Activated naive CD4-positive, alpha-beta T cell treated with anti-CD3 and anti-CD28 coated beads for 36 hours (primary cell): ENCODE measurements at regions of chr14 and their contacts with region 1.

Region 1: GRCh38 chr14:32560209-32560857 is 231.2 kb downstream of the AKAP6 start:
- DNase-seq: peak; percentile 64
- H3K4me3 Mint-ChIP-seq: no peak overlapping the region
- H3K27ac Mint-ChIP-seq: no peak overlapping the region
- H3K4me1 Mint-ChIP-seq: peaks cover 12% of the 10 kb centered on the region
- H3K27me3 Mint-ChIP-seq: no peaks in the 10 kb centered on the region

Region 2: GRCh38 chr14:31510222-31510621 is 1050.1 kb before region 1 on chr14:
- CTCF ChIA-PET with region 1: no interaction called
- intact Hi-C with region 1: loop called (anchors 1 kb)
- DNase-seq: no peak
- H3K4me3 Mint-ChIP-seq: no peak overlapping the region
- H3K27ac Mint-ChIP-seq: no peak overlapping the region
- H3K4me1 Mint-ChIP-seq: no peaks in the 10 kb centered on the region
- H3K27me3 Mint-ChIP-seq: no peaks in the 10 kb centered on the region

Region 3: GRCh38 chr14:32469388-32470160 is 90.8 kb before region 1 on chr14:
- CTCF ChIA-PET with region 1: no interaction called
- intact Hi-C with region 1: loop called (anchors 5 kb)
- DNase-seq: no peak
- H3K4me3 Mint-ChIP-seq: no peak overlapping the region
- H3K27ac Mint-ChIP-seq: no peak overlapping the region
- H3K4me1 Mint-ChIP-seq: no peaks in the 10 kb centered on the region
- H3K27me3 Mint-ChIP-seq: no peaks in the 10 kb centered on the region